Activated B cell treated with CpG ODN at 0.5 μM for 24 hours (primary cell): ENCODE measurements at regions of chr4 and their contacts with region 1.

Region 1: GRCh38 chr4:68375667-68376559 is 26.0 kb upstream of the YTHDC1 start:
- DNase-seq: no peak
- ATAC-seq: peak; percentile 77
- H3K4me3 Mint-ChIP-seq: peak overlapping the region; percentile 53
- H3K27ac Mint-ChIP-seq: no peak overlapping the region
- H3K4me1 Mint-ChIP-seq: peaks cover 10% of the 10 kb centered on the region
- H3K27me3 Mint-ChIP-seq: peaks cover 13% of the 10 kb centered on the region
- CTCF ChIP-seq: peak; percentile 36

Region 2: GRCh38 chr4:67684839-67685531 is 690.9 kb before region 1 on chr4:
- CTCF ChIA-PET with region 1: no interaction called
- POLR2A ChIA-PET with region 1: no interaction called
- intact Hi-C with region 1: no loop called
- DNase-seq: no peak
- ATAC-seq: no peak
- H3K4me3 Mint-ChIP-seq: no peak overlapping the region
- H3K27ac Mint-ChIP-seq: no peak overlapping the region
- H3K4me1 Mint-ChIP-seq: no peaks in the 10 kb centered on the region
- H3K27me3 Mint-ChIP-seq: no peaks in the 10 kb centered on the region
- CTCF ChIP-seq: no peak

Region 3: DNA sequence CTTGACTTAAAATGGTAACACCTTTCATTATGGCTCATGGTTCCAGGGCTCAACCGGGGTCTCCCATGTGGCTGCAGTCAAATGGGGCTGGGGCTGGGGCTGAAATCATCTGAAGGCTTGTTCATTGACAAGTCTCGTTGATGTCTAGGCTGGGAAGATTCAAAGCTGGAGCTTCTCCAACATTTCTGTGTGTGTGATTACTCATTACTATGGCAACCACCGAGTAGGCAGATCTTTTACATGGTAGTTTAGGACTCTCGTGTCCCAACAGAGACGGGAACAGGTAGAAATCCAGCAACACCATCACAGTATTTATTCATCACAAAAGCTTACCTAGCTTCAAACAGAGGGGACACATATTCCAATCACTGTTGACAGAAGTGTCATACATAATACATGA is 33.8 kb before region 1 on chr4:
- CTCF ChIA-PET with region 1: no interaction called
- POLR2A ChIA-PET with region 1: no interaction called
- intact Hi-C with region 1: loop called (anchors 5 kb)
- DNase-seq: no peak
- ATAC-seq: no peak
- H3K4me3 Mint-ChIP-seq: no peak overlapping the region
- H3K27ac Mint-ChIP-seq: no peak overlapping the region
- H3K4me1 Mint-ChIP-seq: peaks cover 59% of the 10 kb centered on the region
- H3K27me3 Mint-ChIP-seq: no peaks in the 10 kb centered on the region
- CTCF ChIP-seq: no peak

Region 4: GRCh38 chr4:68349649-68350360 is 26.1 kb before region 1 on chr4 and contains the start of gene YTHDC1:
- CTCF ChIA-PET with region 1: interaction called, 3 read pairs
- POLR2A ChIA-PET with region 1: no interaction called
- intact Hi-C with region 1: loop called (anchors 1 kb)
- DNase-seq: peak; percentile 87
- ATAC-seq: peak; percentile 95
- H3K4me3 Mint-ChIP-seq: peak within 1 kb of the TSS; percentile 99
- H3K27ac Mint-ChIP-seq: peak within 1 kb of the TSS; percentile 99
- H3K4me1 Mint-ChIP-seq: peaks cover 38% of the 10 kb centered on the region
- H3K27me3 Mint-ChIP-seq: peaks cover 3% of the 10 kb centered on the region
- CTCF ChIP-seq: no peak
- total RNA-seq, gene YTHDC1: 101 and 119 TPM in 2 replicates

Region 5: GRCh38 chr4:69546134-69546765 is 1170.3 kb after region 1 on chr4:
- CTCF ChIA-PET with region 1: no interaction called
- POLR2A ChIA-PET with region 1: no interaction called
- intact Hi-C with region 1: no loop called
- DNase-seq: no peak
- ATAC-seq: no peak
- H3K4me3 Mint-ChIP-seq: no peak overlapping the region
- H3K27ac Mint-ChIP-seq: no peak overlapping the region
- H3K4me1 Mint-ChIP-seq: no peaks in the 10 kb centered on the region
- H3K27me3 Mint-ChIP-seq: no peaks in the 10 kb centered on the region
- CTCF ChIP-seq: no peak